Motor neuron (in vitro differentiated cells): ENCODE measurements at regions of chr13 and their contacts with region 1.

Region 1: GRCh38 chr13:35157143-35157755 is 215.2 kb downstream of the NBEA start:
- ATAC-seq: peak in 6 of 8 experiments; percentile 35 to 75 (median 52)
- H3K4me3 ChIP-seq: no peak overlapping the region
- H3K27ac ChIP-seq: no peak overlapping the region
- H3K4me1 ChIP-seq: no peaks in the 10 kb centered on the region

Region 2: DNA sequence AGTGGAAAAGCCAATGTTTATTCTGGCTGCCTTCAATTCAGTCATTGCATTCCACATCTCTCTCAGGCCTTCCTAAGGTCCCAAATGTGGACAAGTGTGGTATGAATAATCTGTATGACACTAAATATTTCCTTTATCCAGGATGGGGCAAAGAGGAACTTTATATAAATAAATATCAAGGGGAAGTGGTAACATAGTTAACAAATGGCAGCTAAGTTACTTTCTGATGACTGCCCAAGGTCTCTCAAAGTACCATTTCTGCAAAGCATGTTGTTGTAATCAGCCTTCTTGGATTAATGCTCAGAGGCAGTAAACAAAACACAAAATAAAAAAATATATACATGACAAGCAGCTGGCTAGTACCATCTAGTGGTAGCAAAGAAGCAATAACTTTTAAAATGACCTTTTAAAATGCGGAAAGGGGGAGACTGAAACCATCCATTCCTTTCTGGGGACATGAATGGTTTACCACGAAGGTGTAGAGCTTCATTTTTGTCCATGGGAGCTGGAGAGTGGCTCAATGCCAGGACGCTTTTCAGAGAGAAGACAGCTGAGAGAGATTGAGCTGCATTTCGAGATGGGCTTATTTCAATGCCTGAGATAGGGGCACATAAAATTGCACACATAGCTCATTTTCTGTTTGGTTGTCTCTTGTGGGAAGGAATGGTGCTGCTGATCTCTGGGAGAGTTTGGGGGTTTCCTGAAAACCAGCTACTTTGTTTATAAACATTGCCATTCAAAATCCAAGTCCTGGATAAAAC is 1080.1 kb before region 1 on chr13:
- in situ Hi-C with region 1: loop called in 2 of 9 experiments (anchors 25 kb)
- ATAC-seq: peak in 4 of 8 experiments; percentile 45 to 72 (median 59)
- H3K4me3 ChIP-seq: no peak overlapping the region
- H3K27ac ChIP-seq: no peak overlapping the region
- H3K4me1 ChIP-seq: no peaks in the 10 kb centered on the region

Region 3: GRCh38 chr13:34913040-34913439 is 244.2 kb before region 1 on chr13:
- in situ Hi-C with region 1: no loop called
- ATAC-seq: peak in 5 of 8 experiments; percentile 19 to 56 (median 34)
- H3K4me3 ChIP-seq: no peak overlapping the region
- H3K27ac ChIP-seq: no peak overlapping the region
- H3K4me1 ChIP-seq: peaks cover 0 to 11% of the 10 kb centered on the region in 2 donors